ENCODE measurements at regions of chr1 and their contacts with region 1.

Region 1: GRCh38 chr1:40951943-40952743 is 27.4 kb upstream of the CTPS1 start:
- DNase-seq: no peak
- H3K4me3 ChIP-seq: no peak overlapping the region
- H3K27ac ChIP-seq: no peak overlapping the region
- H3K4me1 ChIP-seq: peaks cover 0 to 17% (median 11%) of the 10 kb centered on the region in 4 donors
- H3K27me3 ChIP-seq: peaks cover 0 to 9% (median 0%) of the 10 kb centered on the region in 4 donors
- CTCF ChIP-seq: peak; percentile 90 to 95 (median 91)
- EP300 ChIP-seq: no peak
- POLR2A ChIP-seq: no peak

Region 2: DNA sequence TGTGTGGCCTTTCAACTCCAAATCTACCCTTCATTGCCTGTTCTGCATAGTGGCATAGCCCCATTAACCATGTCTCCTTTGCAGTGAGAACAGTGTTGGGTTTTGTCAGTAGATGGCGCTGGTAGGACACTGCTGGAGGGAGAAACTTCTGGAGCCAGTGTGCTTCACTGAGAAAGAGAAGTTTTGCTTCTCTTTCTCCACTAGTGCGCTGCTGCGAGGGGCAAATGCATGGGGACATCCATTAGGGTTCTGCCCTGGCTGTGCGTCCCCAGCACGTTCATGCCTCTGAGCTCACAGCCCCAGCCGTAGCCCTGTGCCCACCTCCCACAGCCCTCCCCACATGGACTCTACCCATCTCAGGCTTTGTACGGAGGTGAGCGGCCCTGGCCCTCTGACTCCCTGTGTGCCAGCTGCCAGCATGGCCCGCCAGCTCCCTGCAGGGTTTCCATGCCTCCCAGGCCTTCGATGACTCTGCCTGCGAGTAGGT is 339.8 kb before region 1 on chr1:
- intact Hi-C with region 1: loop called (anchors 5 kb)
- DNase-seq: no peak
- H3K4me3 ChIP-seq: no peak overlapping the region
- H3K27ac ChIP-seq: no peak overlapping the region
- H3K4me1 ChIP-seq: peaks cover 0 to 5% (median 4%) of the 10 kb centered on the region in 4 donors
- H3K27me3 ChIP-seq: no peaks in the 10 kb centered on the region
- CTCF ChIP-seq: peak; percentile 71 to 81 (median 81)
- EP300 ChIP-seq: no peak
- POLR2A ChIP-seq: no peak

Region 3: GRCh38 chr1:40862008-40862863 is 89.9 kb before region 1 on chr1 and contains the start of gene CITED4:
- intact Hi-C with region 1: loop called (anchors 5 kb)
- DNase-seq: peak; percentile 99
- H3K4me3 ChIP-seq: peak within 1 kb of the TSS; percentile 81 to 94 (median 86)
- H3K27ac ChIP-seq: peak within 1 kb of the TSS; percentile 87 to 92 (median 90)
- H3K4me1 ChIP-seq: peaks cover 15 to 43% (median 28%) of the 10 kb centered on the region in 4 donors
- H3K27me3 ChIP-seq: no peaks in the 10 kb centered on the region
- CTCF ChIP-seq: peak in 2 of 3 experiments; percentile 22 to 38
- EP300 ChIP-seq: no peak
- POLR2A ChIP-seq: peak; percentile 59
- total RNA-seq, gene CITED4: 10.1 to 37.8 (median 18.5) TPM

Region 4: GRCh38 chr1:40895601-40896000 is 56.5 kb before region 1 on chr1:
- intact Hi-C with region 1: no loop called
- DNase-seq: no peak
- H3K4me3 ChIP-seq: no peak overlapping the region
- H3K27ac ChIP-seq: no peak overlapping the region
- H3K4me1 ChIP-seq: peaks cover 0 to 11% (median 9%) of the 10 kb centered on the region in 4 donors
- H3K27me3 ChIP-seq: no peaks in the 10 kb centered on the region
- CTCF ChIP-seq: no peak
- EP300 ChIP-seq: no peak
- POLR2A ChIP-seq: no peak

Measured in esophagus muscularis mucosa (tissue), 4 donors.